ENCODE measurements at regions of chr6 and their contacts with region 1.

Region 1: DNA sequence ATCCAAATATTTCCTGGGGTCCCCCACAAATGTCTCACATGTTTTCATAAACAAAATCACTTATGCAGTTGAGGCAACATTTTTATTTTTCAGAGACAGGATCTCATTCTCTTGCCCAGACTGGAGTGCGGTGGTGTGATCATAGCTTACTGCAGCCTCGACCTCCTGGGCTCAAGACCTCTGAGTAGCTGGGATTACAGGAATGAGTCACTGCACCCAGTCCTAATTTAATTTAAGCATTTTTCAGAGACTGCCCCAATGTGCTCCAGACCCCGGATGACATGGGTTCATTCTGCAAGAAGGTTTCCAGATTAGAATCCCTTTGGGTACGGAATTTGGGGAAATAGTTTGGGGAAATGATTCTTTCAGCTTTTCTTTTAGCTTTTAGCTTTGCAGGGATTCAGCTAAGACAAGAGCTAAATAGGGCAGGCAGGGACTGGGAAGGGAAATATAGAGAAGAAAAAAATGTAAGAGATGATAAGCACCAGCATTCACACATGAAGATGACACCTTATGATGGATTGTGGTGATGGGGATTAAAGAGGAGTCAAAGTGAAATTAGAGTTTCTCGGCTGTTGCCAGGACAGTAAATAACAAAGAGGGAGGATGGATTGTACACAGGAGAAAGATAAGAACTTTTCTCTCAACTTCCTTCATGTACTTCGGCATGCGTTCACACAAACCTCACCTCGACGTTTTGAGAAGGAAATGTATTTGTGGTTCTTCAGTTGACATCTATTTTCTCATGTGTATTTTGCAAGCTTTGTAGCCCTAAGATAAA is 169.4 kb upstream of the TAB2 start:
- DNase-seq: peak; percentile 47
- H3K4me3 Mint-ChIP-seq: peak overlapping the region; percentile 45
- H3K27ac Mint-ChIP-seq: peak overlapping the region; percentile 91
- H3K4me1 Mint-ChIP-seq: peaks cover 87% of the 10 kb centered on the region
- H3K27me3 Mint-ChIP-seq: no peaks in the 10 kb centered on the region

Region 2: GRCh38 chr6:149082286-149082707 is 65.8 kb before region 1 on chr6:
- CTCF ChIA-PET with region 1: interaction called, 7 read pairs
- POLR2A ChIA-PET with region 1: interaction called, 10 read pairs
- intact Hi-C with region 1: loop called (anchors 1 kb)
- DNase-seq: peak; percentile 93
- H3K4me3 Mint-ChIP-seq: no peak overlapping the region
- H3K27ac Mint-ChIP-seq: peak overlapping the region; percentile 26
- H3K4me1 Mint-ChIP-seq: peaks cover 79% of the 10 kb centered on the region
- H3K27me3 Mint-ChIP-seq: no peaks in the 10 kb centered on the region

Region 3: DNA sequence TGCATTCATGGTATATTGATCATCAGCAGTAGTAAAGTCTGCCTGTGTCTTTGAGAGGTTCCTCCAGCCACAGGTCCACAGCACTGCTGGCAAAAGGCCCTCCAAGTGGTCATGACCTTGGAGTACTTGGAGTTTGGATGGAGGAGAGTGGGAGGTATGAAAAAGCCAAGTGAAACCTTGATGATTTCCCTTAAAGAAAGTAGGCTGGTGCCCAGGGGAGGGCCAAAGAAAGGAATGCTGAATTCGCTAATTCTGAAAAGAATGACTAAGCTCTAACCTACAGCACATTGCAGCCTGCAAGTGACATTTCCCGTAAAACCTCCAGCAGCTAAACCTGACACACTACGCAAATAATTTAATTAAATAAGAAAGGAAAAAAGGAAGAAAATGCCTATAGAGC is 54.0 kb before region 1 on chr6:
- CTCF ChIA-PET with region 1: interaction called, 8 read pairs
- POLR2A ChIA-PET with region 1: interaction called, 13 read pairs
- intact Hi-C with region 1: no loop called
- DNase-seq: peak; percentile 51
- H3K4me3 Mint-ChIP-seq: peak overlapping the region; percentile 45
- H3K27ac Mint-ChIP-seq: peak overlapping the region; percentile 93
- H3K4me1 Mint-ChIP-seq: peaks cover 67% of the 10 kb centered on the region
- H3K27me3 Mint-ChIP-seq: no peaks in the 10 kb centered on the region

Region 4: DNA sequence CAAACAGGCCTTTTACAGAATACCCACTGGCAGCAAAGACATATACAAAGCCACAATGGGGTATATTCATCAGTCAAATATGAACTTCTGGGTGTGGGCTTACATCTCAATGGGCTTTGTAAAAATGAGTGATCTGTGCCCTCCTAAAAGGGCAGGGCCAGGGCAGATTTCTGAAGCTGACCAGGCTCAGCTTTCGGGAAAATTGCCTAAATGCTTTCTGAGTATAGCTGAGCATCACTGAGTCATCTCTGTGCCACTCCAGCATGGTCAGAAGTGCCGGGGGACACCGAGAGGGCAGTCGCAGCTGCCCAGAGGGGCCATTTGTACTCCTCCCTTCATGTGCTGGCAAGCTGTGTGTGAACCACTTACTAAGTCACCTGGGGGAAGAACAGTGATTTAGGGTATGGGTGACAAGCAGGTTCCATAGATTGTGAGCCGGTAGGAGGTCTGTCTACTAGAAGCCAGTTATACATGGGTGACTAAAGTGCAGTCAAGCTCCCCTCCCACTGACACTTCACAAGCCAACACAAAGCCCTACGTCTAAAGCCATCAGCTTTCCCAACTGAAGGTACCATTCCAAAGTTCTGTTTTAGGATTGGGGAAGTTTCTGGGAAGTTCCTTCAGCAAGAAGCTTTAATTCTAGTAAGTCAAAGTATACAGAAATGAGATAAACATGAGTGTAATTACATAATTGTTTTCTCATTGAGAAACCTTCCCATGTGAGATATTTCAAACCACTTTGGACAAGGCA is 21.8 kb after region 1 on chr6:
- CTCF ChIA-PET with region 1: interaction called, 3 read pairs
- POLR2A ChIA-PET with region 1: interaction called, 3 read pairs
- intact Hi-C with region 1: loop called (anchors 2 kb)
- DNase-seq: no peak
- H3K4me3 Mint-ChIP-seq: no peak overlapping the region
- H3K27ac Mint-ChIP-seq: no peak overlapping the region
- H3K4me1 Mint-ChIP-seq: peaks cover 44% of the 10 kb centered on the region
- H3K27me3 Mint-ChIP-seq: no peaks in the 10 kb centered on the region

Region 5: GRCh38 chr6:149423964-149424440 is 275.9 kb after region 1 on chr6:
- CTCF ChIA-PET with region 1: no interaction called
- POLR2A ChIA-PET with region 1: no interaction called
- intact Hi-C with region 1: loop called (anchors 5 kb)
- DNase-seq: no peak
- H3K4me3 Mint-ChIP-seq: no peak overlapping the region
- H3K27ac Mint-ChIP-seq: no peak overlapping the region
- H3K4me1 Mint-ChIP-seq: peaks cover 25% of the 10 kb centered on the region
- H3K27me3 Mint-ChIP-seq: no peaks in the 10 kb centered on the region